H1 (cell line): ENCODE measurements at regions of chr13 and their contacts with region 1.

Region 1: GRCh38 chr13:49606747-49607648 is 21.3 kb upstream of the ARL11 start:
- DNase-seq: peak; percentile 70 to 81
- H3K4me3 ChIP-seq: no peak overlapping the region
- H3K27ac ChIP-seq: no peak overlapping the region
- H3K4me1 ChIP-seq: no peaks in the 10 kb centered on the region
- H3K27me3 ChIP-seq: no peaks in the 10 kb centered on the region
- CTCF ChIP-seq: peak; percentile 70 to 87 (median 80)
- EP300 ChIP-seq: no peak
- POLR2A ChIP-seq: no peak
- RAD21 ChIP-seq: peak; percentile 93 to 96

Region 2: GRCh38 chr13:49620170-49620621 is 13.2 kb after region 1 on chr13:
- CTCF ChIA-PET with region 1: interaction called, 10 read pairs
- POLR2A ChIA-PET with region 1: no interaction called
- DNase-seq: no peak
- H3K4me3 ChIP-seq: no peak overlapping the region
- H3K27ac ChIP-seq: no peak overlapping the region
- H3K4me1 ChIP-seq: peaks cover 0 to 3% (median 0%) of the 10 kb centered on the region in 4 experiments; a peak in 1 of 7 replicates
- H3K27me3 ChIP-seq: no peaks in the 10 kb centered on the region
- CTCF ChIP-seq: no peak
- EP300 ChIP-seq: no peak
- POLR2A ChIP-seq: no peak
- RAD21 ChIP-seq: no peak

Region 3: DNA sequence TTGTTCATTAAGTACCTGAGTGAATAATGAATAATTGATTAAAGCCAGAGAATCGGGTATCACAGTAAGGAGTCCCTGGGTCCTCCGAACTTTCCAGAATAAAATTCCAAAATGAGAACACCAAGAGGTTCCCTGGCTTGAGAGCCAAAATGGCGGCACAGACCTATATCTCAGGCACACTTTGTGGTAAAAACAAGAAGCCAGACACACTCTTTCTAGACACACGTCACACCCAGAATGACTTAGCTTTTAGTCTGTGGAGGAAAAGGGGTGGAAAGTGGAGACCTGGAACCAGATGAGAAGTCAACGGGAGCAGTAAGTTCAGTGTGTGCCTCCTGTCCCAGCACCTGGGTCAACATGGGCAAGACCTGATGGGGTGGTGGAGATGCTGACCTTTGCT is 29.7 kb after region 1 on chr13:
- CTCF ChIA-PET with region 1: no interaction called
- POLR2A ChIA-PET with region 1: no interaction called
- DNase-seq: no peak
- H3K4me3 ChIP-seq: peak overlapping the region in 1 of 4 experiments; percentile 54; a peak in 2 of 8 replicates
- H3K27ac ChIP-seq: no peak overlapping the region
- H3K4me1 ChIP-seq: peaks cover 8 to 14% (median 9%) of the 10 kb centered on the region in 4 experiments
- H3K27me3 ChIP-seq: no peaks in the 10 kb centered on the region
- CTCF ChIP-seq: no peak
- EP300 ChIP-seq: no peak
- POLR2A ChIP-seq: no peak
- RAD21 ChIP-seq: no peak